Prostate gland (tissue), 2 donors: ENCODE measurements at regions of chr15 and their contacts with region 1.

Region 1: DNA sequence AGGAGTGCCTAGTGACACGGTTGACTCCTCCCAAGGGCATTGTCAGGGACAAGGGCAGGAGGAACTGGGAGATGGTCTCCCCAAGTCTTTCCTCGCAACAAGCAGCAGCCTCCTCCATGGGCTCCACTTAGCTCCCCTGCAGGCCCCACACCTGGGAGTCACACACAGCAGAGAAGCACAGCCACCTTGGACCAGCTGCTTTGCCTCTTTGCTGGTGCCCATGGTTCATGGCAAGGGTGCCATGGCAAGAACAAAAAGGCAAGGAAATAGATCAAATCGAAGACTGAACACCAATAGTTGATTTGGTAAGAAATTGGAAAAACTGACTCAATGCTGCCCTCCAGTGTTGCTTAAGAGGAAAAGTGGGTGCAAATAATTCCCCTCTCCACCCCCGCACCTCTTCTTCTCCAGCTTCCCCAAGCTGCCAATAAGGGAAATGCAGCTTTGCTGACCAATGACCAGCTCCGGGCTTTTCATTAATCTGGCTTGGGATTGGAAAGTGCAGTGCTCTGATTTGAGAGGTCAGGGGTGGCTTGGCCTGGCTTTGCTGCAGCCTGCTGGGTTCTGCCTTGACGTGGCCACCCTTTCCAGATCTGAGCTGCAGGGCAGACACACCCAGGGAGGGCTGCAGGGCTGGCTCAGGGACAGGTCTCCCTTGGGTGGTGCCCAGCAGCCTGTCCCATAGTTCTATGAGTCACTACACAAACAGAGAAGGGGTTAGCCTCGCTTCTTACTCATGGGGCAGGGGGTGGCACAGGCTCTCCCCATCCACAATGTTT is 162.0 kb downstream of the KLF13 start:
- DNase-seq: peak; percentile 44
- H3K4me3 ChIP-seq: no peak overlapping the region
- H3K27ac ChIP-seq: no peak overlapping the region
- H3K4me1 ChIP-seq: peaks cover 8% of the 10 kb centered on the region
- H3K27me3 ChIP-seq: no peaks in the 10 kb centered on the region
- CTCF ChIP-seq: peak; percentile 81 to 94 (median 88)
- POLR2A ChIP-seq: no peak

Region 2: GRCh38 chr15:31200735-31201151 is 287.9 kb before region 1 on chr15:
- intact Hi-C with region 1: loop called (anchors 5 kb)
- DNase-seq: peak; percentile 83
- H3K4me3 ChIP-seq: no peak overlapping the region
- H3K27ac ChIP-seq: no peak overlapping the region
- H3K4me1 ChIP-seq: peaks cover 10% of the 10 kb centered on the region
- H3K27me3 ChIP-seq: no peaks in the 10 kb centered on the region
- CTCF ChIP-seq: peak; percentile 40 to 85 (median 75)
- POLR2A ChIP-seq: no peak

Region 3: DNA sequence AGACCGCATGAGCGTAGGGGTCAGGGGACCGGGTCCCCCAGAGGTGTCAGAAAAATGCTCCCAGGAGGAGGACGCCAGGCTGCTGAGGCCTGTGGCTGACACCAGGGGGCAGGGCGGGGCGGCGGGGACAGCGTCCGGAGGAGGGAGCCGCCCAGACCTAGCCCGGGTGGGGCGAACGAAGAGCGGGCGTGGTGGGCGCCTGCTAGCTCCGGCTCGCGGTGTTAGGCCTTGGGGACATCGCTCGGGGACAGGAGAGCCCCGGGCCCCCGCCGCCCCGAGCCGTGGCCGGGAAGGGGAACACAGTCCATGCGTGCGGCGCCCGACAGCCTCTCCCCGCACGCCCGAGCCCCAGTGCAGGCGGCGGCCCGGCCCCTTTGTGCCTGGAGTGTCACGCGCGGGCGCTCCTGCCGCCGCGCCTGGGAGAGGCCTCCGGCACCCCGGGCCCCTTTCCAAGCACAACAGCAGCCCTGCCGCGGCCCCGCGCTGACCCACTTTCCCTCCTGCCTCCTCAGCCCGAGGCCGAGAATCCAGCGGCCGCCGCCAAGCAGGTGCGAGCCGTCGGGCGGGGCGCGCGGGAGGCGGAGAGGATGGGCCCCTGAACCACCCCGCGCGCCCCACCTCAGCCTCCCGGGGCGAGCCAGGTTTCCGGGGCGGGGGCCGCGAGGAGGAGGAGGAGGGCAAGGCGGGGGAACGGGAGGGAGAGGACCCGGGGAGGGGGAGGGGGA is 273.0 kb before region 1 on chr15:
- intact Hi-C with region 1: loop called (anchors 5 kb)
- DNase-seq: peak; percentile 64
- H3K4me3 ChIP-seq: peak overlapping the region; percentile 36 to 48
- H3K27ac ChIP-seq: peak overlapping the region; percentile 87 to 88
- H3K4me1 ChIP-seq: peaks cover 16% of the 10 kb centered on the region
- H3K27me3 ChIP-seq: no peaks in the 10 kb centered on the region
- CTCF ChIP-seq: peak; percentile 78 to 86 (median 83)
- POLR2A ChIP-seq: no peak

Region 4: GRCh38 chr15:31344823-31345605 is 143.6 kb before region 1 on chr15:
- intact Hi-C with region 1: no loop called
- DNase-seq: no peak
- H3K4me3 ChIP-seq: no peak overlapping the region
- H3K27ac ChIP-seq: peak overlapping the region in 1 of 2 donors; percentile 17
- H3K4me1 ChIP-seq: peaks cover 6% of the 10 kb centered on the region
- H3K27me3 ChIP-seq: no peaks in the 10 kb centered on the region
- CTCF ChIP-seq: no peak
- POLR2A ChIP-seq: no peak

Region 5: DNA sequence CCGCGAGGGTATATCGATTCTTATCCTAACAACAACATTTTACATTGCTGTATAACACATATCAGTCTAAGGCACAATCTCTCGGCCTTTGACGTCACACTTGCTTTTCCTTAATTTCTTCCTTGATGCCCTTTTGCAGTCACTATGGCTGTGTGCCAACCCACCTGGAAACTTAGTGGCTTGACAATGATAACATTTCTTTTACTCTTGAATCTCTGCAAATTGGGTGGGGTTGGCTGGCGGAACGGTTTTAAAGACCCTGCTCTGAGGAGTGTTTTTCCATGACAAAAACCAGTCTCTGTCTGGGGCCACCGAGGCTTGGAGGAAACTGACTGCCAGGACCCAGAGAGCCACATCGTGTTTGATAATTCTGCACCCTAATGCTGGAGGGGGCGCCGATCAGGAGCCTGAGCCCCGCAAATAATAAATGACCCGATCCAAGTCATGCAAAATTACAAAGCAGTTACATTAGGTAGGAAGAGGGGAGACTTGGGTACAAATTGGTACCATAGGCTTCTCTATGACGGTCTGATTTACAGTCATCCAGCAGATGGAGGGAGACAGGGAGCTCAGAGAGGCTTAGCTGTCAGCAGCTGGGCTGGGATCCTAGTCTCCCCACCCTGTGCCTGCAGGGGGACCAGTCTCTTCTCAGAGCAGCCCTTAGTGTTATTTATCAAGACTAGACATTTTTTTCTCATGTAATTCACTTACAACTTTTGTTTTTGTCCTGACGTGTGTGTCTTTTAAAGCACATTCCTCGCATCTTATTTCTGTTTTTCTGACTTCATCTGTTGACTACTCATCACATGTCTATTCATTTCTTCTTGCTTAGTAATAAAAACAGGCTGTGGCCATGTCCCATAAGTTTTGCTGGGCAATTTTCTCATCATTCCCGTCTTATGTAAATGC is 46.2 kb before region 1 on chr15:
- intact Hi-C with region 1: loop called (anchors 5 kb)
- DNase-seq: no peak
- H3K4me3 ChIP-seq: no peak overlapping the region
- H3K27ac ChIP-seq: no peak overlapping the region
- H3K4me1 ChIP-seq: no peaks in the 10 kb centered on the region
- H3K27me3 ChIP-seq: no peaks in the 10 kb centered on the region
- CTCF ChIP-seq: no peak
- POLR2A ChIP-seq: no peak